Aorta (tissue), 5 donors: ENCODE measurements at regions of chr22 and their contacts with region 1.

Region 1: DNA sequence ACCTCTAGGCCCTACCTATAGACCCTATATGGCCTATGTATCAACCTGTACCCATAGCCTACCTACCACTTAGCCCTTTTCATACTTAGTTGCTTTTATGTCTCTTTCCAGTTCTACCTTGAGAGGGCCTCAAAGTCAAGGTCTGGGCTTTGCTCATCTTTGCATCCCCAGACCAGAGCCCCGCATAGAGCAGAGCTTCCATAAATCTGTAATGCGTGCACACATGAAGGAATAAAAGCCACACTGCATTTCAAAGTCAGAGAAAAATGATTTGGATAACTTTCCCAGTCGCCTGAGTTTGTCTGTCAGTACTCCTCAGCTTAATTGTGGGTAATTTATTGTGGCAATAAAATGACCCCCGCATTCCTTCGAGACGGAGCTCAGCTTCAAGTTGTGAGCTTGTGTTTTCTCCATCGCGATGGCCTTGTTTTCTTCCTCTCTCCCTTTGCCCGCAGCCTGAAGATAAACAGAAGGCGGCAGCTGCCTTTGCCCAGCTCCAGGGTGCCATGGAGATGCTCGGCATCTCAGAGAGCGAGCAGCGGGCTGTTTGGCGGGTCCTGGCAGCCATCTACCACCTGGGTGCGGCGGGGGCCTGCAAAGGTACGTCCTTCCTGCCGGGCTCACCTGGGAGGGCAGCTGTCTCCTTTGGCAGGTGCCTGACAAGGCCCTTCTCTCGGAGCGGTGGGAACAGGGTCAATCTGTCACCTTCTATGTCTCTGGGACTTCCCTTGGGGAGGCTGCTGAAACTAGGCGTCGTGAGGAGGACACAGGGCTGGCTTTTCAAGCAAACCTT is 55.7 kb downstream of the MYO18B start:
- DNase-seq: peak in 1 of 2 donors; percentile 54
- ATAC-seq: no peak
- H3K4me3 ChIP-seq: no peak overlapping the region
- H3K27ac ChIP-seq: no peak overlapping the region
- H3K4me1 ChIP-seq: no peaks in the 10 kb centered on the region
- H3K27me3 ChIP-seq: no peaks in the 10 kb centered on the region

Region 2: GRCh38 chr22:25774575-25775026 is 23.1 kb before region 1 on chr22:
- intact Hi-C with region 1: no loop called
- DNase-seq: no peak
- ATAC-seq: no peak
- H3K4me3 ChIP-seq: no peak overlapping the region
- H3K27ac ChIP-seq: no peak overlapping the region
- H3K4me1 ChIP-seq: no peaks in the 10 kb centered on the region
- H3K27me3 ChIP-seq: no peaks in the 10 kb centered on the region

Region 3: DNA sequence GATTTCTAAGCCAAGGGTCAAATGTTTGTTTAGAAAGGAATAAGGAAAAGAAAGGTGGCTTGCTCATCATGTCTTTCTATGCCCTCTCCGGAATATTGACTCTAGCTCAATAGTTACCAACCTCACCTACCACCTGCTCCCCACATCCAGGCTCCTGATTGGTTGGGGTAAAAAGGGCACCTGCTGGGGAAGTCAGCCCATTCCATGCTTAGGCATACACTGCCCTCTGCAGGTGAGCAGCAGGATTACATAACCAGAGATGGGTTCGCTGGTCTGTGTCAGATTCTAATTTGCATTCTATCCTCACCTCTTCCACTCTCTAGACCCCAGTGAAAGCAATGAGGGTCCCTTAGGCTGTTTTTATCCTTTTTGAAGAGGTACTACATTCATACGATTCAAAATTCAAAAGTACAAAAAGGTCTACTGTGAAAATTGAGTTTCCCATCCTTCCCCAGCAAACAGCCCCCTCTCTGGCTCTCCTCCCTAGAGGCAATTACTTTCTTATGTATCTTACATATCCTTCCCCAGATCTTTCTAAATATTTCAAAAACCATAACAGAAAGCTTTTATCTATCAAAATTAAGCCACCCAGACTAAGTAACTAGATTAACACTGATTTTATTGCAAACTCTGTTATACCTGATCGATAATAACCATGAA is 533.4 kb after region 1 on chr22:
- intact Hi-C with region 1: loop called in 1 of 2 experiments (anchors 10 kb)
- DNase-seq: no peak
- ATAC-seq: no peak
- H3K4me3 ChIP-seq: no peak overlapping the region
- H3K27ac ChIP-seq: no peak overlapping the region
- H3K4me1 ChIP-seq: no peaks in the 10 kb centered on the region
- H3K27me3 ChIP-seq: no peaks in the 10 kb centered on the region